A673 (cell line): ENCODE measurements at regions of chr5 and their contacts with region 1.

Region 1: GRCh38 chr5:53095931-53096525 is 13.5 kb downstream of the MOCS2 start:
- DNase-seq: peak; percentile 72
- H3K4me3 ChIP-seq: no peak overlapping the region
- H3K27ac ChIP-seq: no peak overlapping the region
- H3K4me1 ChIP-seq: no peaks in the 10 kb centered on the region
- H3K27me3 ChIP-seq: no peaks in the 10 kb centered on the region
- CTCF ChIP-seq: peak; percentile 86

Region 2: DNA sequence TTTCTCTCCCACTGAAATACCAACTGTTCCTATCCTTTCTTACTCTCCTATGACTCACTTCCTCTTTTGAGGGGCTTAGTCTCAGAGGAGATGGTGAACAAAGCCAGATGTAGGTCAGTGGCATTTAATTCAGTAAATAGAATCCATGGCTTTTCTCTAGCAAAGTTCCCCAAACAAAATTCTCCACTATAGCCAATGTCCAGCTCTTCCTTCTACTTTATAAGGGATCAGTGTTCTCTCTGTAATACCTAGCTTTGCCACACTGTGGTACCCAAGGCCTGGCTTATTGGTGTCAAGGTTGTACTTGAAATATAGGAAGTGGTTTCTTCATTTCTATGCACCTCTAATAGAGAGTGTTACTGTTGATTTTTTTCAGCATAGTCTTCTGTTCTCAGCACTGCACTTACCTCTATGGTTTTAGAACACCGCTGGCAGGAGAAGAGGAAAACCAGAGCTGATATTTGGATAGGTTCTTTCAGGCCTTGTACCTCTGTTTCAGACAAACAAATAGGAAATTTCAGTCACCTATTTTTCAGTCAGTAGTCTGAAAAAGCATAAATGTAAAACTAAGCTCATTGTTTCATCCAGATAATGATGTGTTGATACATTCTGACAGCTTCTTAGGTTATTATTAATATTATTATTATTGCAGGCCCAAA is 147.5 kb before region 1 on chr5:
- CTCF ChIA-PET with region 1: interaction called, 6 read pairs
- POLR2A ChIA-PET with region 1: no interaction called
- intact Hi-C with region 1: loop called (anchors 1 kb)
- DNase-seq: peak; percentile 82
- H3K4me3 ChIP-seq: no peak overlapping the region
- H3K27ac ChIP-seq: no peak overlapping the region
- H3K4me1 ChIP-seq: peaks cover 15% of the 10 kb centered on the region
- H3K27me3 ChIP-seq: no peaks in the 10 kb centered on the region
- CTCF ChIP-seq: peak; percentile 81